Heart left ventricle (tissue), 16 donors: ENCODE measurements at regions of chr6 and their contacts with region 1.

Region 1: GRCh38 chr6:27503436-27504030 is 30.6 kb upstream of the ZNF184 start:
- DNase-seq: peak; percentile 40 to 79 (median 44)
- ATAC-seq: peak; percentile 72 to 82 (median 79)
- H3K4me3 ChIP-seq: peak overlapping the region in 11 of 12 donors; percentile 29 to 63 (median 52)
- H3K27ac ChIP-seq: peak overlapping the region in 1 of 12 donors; percentile 2
- H3K4me1 ChIP-seq: peaks cover 0 to 13% (median 5%) of the 10 kb centered on the region in 12 donors
- H3K27me3 ChIP-seq: peaks cover 0 to 28% (median 2%) of the 10 kb centered on the region in 9 donors
- CTCF ChIP-seq: no peak
- POLR2A ChIP-seq: no peak

Region 2: GRCh38 chr6:27565821-27566766 is 62.6 kb after region 1 on chr6:
- intact Hi-C with region 1: loop called in 1 of 10 experiments (anchors 10 kb)
- DNase-seq: no peak
- ATAC-seq: no peak
- H3K4me3 ChIP-seq: no peak overlapping the region
- H3K27ac ChIP-seq: no peak overlapping the region
- H3K4me1 ChIP-seq: no peaks in the 10 kb centered on the region
- H3K27me3 ChIP-seq: peaks cover 32 to 88% (median 67%) of the 10 kb centered on the region in 9 donors
- CTCF ChIP-seq: no peak
- POLR2A ChIP-seq: no peak

Region 3: DNA sequence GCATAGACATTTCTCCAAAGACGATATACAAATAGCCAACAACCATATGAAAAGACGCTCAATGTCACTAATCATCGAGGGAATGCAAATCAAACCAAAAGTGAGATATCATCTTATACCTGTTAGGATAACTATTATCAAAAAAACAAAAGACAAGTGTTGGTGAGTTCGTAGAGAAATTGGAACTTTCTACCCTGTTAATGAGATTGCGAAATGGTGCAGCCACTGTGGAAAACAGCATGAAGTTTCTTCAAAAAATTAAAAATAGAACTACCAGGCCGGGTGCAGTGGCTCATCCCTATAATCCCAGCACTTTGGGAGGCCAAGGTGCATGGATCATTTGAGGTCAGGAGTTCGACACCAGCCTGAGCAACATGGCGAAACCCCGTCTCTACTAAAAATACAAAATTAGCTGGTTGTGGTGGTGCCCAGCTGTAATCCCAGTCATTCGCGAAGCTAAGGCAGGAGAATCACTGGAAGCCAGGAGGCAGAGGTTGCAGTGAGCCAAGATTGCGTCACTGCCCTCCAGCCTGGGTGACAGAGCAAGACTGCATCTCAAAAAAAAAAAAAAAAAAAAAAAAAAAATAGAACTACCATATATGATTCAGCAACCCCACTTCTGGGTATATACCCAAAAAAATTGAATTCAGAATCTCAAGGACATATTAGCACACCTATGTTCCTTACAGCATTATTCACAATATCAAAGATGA is 139.4 kb after region 1 on chr6:
- intact Hi-C with region 1: no loop called
- DNase-seq: no peak
- ATAC-seq: no peak
- H3K4me3 ChIP-seq: no peak overlapping the region
- H3K27ac ChIP-seq: no peak overlapping the region
- H3K4me1 ChIP-seq: no peaks in the 10 kb centered on the region
- H3K27me3 ChIP-seq: peaks cover 0 to 17% (median 0%) of the 10 kb centered on the region in 9 donors
- CTCF ChIP-seq: no peak
- POLR2A ChIP-seq: no peak

Region 4: GRCh38 chr6:28182255-28182654 is 678.7 kb after region 1 on chr6:
- intact Hi-C with region 1: no loop called
- DNase-seq: no peak
- ATAC-seq: no peak
- H3K4me3 ChIP-seq: no peak overlapping the region
- H3K27ac ChIP-seq: no peak overlapping the region
- H3K4me1 ChIP-seq: no peaks in the 10 kb centered on the region
- H3K27me3 ChIP-seq: peaks cover 0 to 16% (median 0%) of the 10 kb centered on the region in 9 donors
- CTCF ChIP-seq: no peak
- POLR2A ChIP-seq: no peak